Activated CD4-positive, alpha-beta memory T cell treated with anti-CD3 and anti-CD28 coated beads, Interleukin-2, amount 10 ng/mL, durations not matched to agents 7 days and 5 days (primary cell): ENCODE measurements at regions of chr22 and their contacts with region 1.

Region 1: DNA sequence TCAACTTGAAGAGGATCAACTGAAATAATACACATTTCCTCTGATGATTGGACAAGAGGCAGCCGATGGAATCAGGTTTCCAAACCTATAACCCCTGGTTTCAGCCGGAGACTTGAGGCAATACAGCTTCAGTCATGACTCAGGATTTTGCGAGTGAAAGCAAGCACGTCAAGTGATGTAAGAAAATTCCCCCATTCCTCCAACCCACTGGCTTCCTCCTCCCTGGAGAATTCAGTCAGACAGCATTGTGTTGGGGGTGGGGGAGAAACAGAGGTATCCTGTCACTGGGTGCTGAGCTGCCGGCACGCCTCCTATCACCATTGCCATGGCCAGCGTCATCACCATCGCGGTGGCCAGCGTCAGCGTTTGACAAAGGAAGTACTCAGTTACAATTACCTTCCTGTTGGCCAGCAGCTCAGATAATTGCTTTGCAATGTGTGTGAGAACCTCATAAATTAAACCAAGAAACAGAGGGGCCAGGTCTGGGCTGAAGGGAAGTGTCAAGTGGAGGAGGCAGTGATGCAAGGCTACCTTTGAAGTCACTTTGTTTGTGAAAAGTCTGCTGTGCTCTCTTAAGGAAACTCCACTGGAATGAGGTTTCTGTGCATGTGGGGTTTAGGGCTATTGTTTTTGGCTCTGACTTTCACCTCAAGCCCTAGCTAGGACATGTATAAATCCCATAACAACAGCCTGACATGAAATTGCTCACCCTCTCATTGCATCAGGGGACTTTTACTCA is 50.2 kb downstream of the LIF start:
- DNase-seq: peak; percentile 79
- H3K4me3 Mint-ChIP-seq: peak overlapping the region; percentile 42
- H3K27ac Mint-ChIP-seq: peak overlapping the region; percentile 95
- H3K4me1 Mint-ChIP-seq: peaks cover 78% of the 10 kb centered on the region
- H3K27me3 Mint-ChIP-seq: no peaks in the 10 kb centered on the region

Region 2: GRCh38 chr22:30159561-30160353 is 36.6 kb before region 1 on chr22:
- CTCF ChIA-PET with region 1: no interaction called
- POLR2A ChIA-PET with region 1: interaction called, 10 read pairs
- DNase-seq: no peak
- H3K4me3 Mint-ChIP-seq: no peak overlapping the region
- H3K27ac Mint-ChIP-seq: peak overlapping the region; percentile 91
- H3K4me1 Mint-ChIP-seq: peaks cover 66% of the 10 kb centered on the region
- H3K27me3 Mint-ChIP-seq: no peaks in the 10 kb centered on the region

Region 3: GRCh38 chr22:30178181-30179126 is 17.9 kb before region 1 on chr22:
- CTCF ChIA-PET with region 1: interaction called, 9 read pairs
- POLR2A ChIA-PET with region 1: interaction called, 34 read pairs
- DNase-seq: peak; percentile 48
- H3K4me3 Mint-ChIP-seq: no peak overlapping the region
- H3K27ac Mint-ChIP-seq: peak overlapping the region; percentile 91
- H3K4me1 Mint-ChIP-seq: peaks cover 80% of the 10 kb centered on the region
- H3K27me3 Mint-ChIP-seq: no peaks in the 10 kb centered on the region

Region 4: DNA sequence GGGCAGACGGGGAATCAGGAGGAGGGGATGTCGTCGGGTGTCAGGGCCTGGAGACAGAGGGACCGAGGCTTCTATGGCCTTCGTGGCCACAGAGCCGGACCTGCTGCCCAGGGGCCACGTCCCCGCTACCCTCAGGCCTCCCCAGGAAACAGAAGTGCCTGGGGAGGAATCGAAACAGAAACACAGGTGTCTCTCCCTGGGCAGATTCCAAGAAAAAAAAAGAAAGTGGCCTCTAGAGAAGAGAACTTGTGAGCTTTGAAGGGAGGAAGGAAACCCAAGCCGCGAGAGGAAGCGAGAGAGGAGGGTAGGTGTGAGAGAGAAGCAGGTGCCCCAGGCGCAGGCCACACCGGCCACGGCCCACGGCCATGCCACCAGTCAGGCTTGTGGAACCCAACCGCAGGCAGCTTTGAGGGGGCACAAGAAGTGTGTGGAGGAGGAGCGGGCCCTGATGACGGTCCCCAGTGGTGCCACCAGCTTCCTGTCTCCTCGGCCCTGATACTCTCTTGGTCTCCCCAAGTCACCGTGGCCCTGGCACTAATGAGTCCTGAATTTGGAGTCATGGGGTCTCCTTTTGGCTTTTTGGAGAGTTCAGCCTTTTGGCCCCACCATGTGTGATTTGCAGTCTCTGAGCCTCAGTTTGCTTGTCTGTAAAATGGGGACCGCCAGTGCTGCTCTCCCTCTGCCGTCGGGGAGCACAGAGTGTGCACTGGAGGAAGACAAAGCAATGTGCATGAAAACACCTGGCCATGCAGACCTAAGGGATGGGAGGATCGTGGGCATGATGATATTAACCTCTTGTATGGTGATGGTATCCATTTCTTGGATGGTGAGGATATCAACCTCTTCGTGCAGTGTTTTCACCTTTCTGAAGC is 25.0 kb after region 1 on chr22:
- CTCF ChIA-PET with region 1: no interaction called
- POLR2A ChIA-PET with region 1: interaction called, 11 read pairs
- DNase-seq: peak; percentile 81
- H3K4me3 Mint-ChIP-seq: peak overlapping the region; percentile 42
- H3K27ac Mint-ChIP-seq: peak overlapping the region; percentile 96
- H3K4me1 Mint-ChIP-seq: peaks cover 81% of the 10 kb centered on the region
- H3K27me3 Mint-ChIP-seq: no peaks in the 10 kb centered on the region

Region 5: DNA sequence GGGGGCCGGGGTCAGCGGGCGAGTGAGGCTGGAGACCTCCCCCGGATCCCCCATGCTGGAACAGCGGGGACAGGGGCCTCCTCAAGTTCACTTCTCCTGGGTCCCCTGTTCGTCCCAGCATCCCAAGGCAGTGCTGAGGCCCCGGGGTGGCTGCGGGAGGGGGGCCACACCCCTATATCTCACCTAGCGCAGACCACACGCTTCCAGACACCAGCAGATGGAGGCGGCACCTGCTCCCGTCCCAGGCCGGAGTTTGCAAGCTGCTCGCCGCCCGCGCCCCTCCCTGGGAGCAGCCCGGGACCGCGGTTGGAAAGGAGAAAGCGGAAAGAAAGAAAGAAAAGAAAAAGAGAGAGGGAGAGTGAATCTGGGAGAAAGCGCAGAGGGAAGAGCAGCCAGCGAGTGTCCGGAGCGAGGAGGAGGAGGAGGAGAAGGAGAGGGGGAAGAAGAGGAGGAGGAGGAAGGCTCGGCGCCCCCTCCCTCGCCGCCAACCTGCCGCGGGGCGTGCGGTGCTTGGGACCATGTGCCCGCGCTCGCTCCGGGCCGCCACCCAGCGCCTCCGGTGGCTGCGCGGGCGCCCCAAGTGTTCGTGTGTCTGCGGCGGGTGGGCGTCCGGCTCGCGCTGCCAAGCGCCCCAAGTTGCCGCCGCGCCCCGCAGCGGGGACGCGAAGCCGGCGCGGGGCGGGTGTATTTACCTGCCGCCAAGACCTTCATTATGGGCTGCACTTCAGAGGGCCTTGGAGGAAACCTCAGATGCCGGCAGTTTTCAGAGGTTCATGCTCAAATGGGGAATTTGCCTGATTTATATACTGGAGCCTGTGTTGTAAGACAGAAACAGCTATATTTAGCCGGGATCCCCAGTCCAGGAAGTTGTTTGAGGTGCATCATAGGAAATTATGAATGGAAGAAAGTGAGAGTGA is 49.9 kb after region 1 on chr22 and contains the start of gene LIF:
- CTCF ChIA-PET with region 1: no interaction called
- POLR2A ChIA-PET with region 1: interaction called, 11 read pairs
- DNase-seq: peak; percentile 67
- H3K4me3 Mint-ChIP-seq: peak within 1 kb of the TSS; percentile 95
- H3K27ac Mint-ChIP-seq: peak within 1 kb of the TSS; percentile 91
- H3K4me1 Mint-ChIP-seq: peaks cover 78% of the 10 kb centered on the region
- H3K27me3 Mint-ChIP-seq: no peaks in the 10 kb centered on the region
- total RNA-seq, gene LIF: 94.6 to 94.8 TPM

Region 6: DNA sequence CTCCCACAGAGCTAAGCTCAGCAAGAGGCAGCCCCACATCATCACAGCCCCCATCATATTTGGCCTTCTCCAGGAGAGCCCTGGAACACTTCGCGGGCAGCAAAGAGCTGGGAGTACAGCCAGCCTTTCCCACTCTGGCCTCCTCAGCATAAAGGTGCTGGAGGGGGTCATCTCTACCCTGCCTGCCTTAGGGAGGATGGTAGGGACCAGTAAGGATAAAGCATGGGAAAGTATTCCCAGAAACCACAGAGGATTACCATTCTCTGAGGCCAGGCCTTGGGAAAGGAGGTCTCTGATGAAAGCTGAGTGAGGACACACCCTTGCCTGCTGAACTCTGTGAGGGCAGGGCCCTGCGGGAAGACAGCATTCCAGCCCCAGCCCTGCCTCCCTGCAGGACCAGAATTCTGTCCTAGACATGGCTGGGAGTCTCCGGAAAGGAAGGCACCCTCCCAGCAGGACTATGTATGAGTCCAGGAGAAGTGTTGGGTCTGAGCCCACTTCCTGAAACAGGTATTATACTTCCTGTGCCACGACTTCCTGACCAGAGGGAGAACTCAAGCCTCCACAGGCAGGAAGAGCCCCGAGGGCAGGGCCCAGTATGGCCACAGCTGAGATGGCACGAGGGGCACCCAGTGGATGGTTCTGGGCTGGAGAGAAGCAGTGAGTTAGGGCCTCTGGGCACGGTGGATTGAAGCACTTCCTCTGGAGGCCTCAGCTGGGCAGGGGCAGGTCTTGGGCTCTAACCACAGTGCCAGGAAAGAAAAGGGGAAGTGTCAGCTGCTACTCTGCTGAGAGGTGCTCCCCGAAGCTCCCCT is 105.9 kb after region 1 on chr22:
- CTCF ChIA-PET with region 1: no interaction called
- POLR2A ChIA-PET with region 1: no interaction called
- DNase-seq: peak; percentile 30
- H3K4me3 Mint-ChIP-seq: peak overlapping the region; percentile 42
- H3K27ac Mint-ChIP-seq: peak overlapping the region; percentile 87
- H3K4me1 Mint-ChIP-seq: peaks cover 64% of the 10 kb centered on the region
- H3K27me3 Mint-ChIP-seq: no peaks in the 10 kb centered on the region